Right ventricle myocardium inferior (tissue), 1 donor: ENCODE measurements at regions of chr2 and their contacts with region 1.

Region 1: DNA sequence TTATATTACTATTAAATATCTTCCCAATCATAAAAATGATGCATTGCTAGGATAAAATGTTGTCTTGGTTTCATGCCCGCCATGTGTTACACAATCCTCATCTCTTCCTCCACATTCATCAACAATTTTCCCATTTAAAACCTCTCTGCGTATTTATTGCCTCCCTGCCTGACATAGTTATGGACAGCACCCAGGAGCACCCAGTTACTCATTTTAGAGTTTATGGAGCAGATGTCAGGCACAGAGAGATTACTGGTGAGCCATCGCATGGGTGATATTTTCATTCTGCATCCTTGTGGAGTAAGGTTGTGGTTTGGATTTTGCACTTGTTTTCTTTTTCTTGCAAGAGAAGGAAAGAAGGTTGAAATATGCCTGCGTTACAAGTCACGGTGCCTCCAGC is 116.7 kb upstream of the NPAS2 start:
- DNase-seq: no peak
- ATAC-seq: no peak

Region 2: GRCh38 chr2:100625717-100626116 is 77.5 kb before region 1 on chr2:
- intact Hi-C with region 1: loop called (anchors 10 kb)
- DNase-seq: no peak
- ATAC-seq: no peak